PC-3 (cell line): ENCODE measurements at regions of chr5 and their contacts with region 1.

Region 1: DNA sequence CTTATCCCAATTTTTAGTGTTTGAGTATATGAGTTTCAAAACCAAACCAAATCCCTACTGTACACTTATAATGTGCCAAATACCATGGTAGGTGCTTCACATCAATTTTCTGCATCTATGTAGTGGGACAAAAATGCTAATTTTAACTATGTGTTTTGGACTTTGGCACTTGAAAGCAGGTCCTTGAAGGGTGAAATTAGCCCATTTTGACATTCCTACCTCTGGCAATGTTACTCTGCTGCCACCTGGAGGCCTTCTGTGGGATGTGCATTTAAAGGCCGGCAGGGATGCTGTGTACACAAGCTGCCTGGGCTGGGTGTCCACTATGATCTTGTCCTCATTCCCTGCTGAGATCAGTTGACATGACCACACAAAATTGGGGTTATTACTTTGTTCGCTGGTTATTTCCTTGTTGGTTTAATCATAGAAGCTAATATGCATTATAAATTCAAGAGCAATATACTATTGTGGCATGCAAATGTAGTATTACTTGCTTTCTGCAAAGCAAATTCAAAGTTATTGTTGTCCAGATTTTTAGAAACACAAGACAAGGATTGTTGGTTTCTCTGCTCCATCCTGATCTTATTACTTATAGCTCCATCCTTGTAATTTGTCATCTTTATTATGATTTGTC is 166.8 kb downstream of the ARHGEF28 start:
- DNase-seq: peak; percentile 83
- ATAC-seq: peak; percentile 57
- H3K4me3 ChIP-seq: no peak overlapping the region
- H3K27ac ChIP-seq: no peak overlapping the region
- H3K4me1 ChIP-seq: peaks cover 46% of the 10 kb centered on the region
- H3K27me3 ChIP-seq: no peaks in the 10 kb centered on the region
- CTCF ChIP-seq: peak; percentile 85

Region 2: DNA sequence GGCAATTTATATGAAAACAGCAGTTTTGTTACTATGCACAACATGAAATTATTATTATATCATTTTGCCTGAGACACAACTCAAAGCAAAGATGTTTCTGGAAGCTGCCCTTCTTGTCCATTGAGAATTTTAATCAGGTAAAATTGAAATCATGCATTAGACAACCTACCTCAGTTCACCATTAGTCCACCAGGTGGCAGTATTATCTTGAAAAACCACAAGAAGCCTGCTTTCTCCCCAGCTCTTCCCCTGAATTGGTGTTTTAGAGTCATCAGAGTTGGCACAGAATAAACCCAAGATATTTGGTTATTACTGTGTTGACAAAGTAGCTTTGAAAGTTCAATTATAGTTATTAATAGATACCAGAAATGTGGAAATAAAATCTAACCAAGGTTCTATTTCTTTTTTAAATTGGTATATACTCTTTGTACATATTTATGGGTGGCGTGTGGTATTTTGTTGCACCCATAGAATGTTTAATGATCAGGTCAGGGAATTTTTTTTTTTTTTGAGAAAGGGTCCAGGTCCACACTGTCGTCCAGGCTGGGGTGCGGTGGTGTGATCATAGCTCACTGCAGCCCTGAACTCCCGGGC is 201.6 kb before region 1 on chr5:
- CTCF ChIA-PET with region 1: interaction called, 5 read pairs
- POLR2A ChIA-PET with region 1: no interaction called
- intact Hi-C with region 1: loop called (anchors 1 kb)
- DNase-seq: peak; percentile 87
- ATAC-seq: peak; percentile 65
- H3K4me3 ChIP-seq: no peak overlapping the region
- H3K27ac ChIP-seq: no peak overlapping the region
- H3K4me1 ChIP-seq: peaks cover 24% of the 10 kb centered on the region
- H3K27me3 ChIP-seq: no peaks in the 10 kb centered on the region
- CTCF ChIP-seq: peak; percentile 84

Region 3: DNA sequence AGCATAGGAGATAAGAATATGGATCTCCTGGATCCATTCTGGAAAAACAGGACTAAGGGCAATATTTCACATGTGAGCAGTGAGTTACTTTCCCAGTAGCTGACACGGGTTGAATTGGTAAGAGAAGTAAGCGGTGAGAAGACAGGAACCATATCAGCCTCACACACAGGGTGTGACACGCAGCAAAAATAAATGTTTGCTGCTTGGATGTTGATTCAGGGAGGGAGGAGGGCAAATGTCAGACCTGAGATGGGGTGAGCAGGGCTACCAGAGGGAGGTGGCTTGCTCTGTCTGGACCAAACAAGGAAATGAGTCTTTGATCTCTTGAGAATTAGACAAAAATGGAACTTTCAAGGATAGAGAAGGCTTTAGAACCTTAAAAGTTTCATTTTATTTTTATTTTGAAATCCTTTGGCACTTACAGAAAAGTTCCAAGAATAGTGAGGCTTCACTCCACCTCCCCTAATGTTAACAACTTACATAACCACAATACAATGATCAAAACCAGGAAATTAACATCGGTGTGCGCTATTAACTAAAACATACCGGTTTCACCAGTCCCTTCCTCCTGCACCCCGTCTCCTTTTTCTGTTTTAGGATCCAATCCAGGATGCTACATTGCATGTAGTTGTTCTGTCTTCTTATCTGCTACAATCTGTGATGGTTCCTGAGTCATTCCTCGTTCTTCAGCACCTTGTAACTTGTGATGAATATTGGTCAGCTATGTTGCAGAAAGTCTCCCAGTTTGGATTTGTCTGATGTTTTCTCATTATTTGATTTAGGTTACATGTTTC is 187.4 kb before region 1 on chr5:
- CTCF ChIA-PET with region 1: no interaction called
- POLR2A ChIA-PET with region 1: no interaction called
- intact Hi-C with region 1: loop called (anchors 5 kb)
- DNase-seq: peak; percentile 72
- ATAC-seq: peak; percentile 88
- H3K4me3 ChIP-seq: peak overlapping the region; percentile 26; the same call in 1 of the 2 replicates
- H3K27ac ChIP-seq: peak overlapping the region; percentile 54
- H3K4me1 ChIP-seq: peaks cover 33% of the 10 kb centered on the region
- H3K27me3 ChIP-seq: no peaks in the 10 kb centered on the region
- CTCF ChIP-seq: no peak

Region 4: DNA sequence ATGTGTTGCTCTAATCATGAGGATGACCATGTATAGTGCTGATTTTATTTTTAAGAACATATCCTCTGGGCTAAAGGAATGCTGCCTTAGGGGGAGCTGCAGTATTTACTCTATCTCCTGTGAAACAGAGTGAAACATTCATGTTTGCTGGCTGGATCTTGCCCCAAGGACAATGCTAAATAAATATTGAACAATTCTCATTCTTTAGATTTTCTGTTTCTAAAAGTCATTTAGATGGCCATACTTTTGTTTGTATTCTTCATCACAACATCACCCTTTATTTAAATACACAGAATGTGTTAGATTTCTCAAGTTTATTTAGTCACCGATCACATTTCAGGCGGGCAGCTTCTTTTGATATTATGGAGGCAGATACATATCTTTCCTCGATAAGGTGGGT is 63.5 kb before region 1 on chr5:
- CTCF ChIA-PET with region 1: no interaction called
- POLR2A ChIA-PET with region 1: no interaction called
- intact Hi-C with region 1: no loop called
- DNase-seq: peak; percentile 58
- ATAC-seq: peak; percentile 88
- H3K4me3 ChIP-seq: no peak overlapping the region
- H3K27ac ChIP-seq: no peak overlapping the region
- H3K4me1 ChIP-seq: peaks cover 12% of the 10 kb centered on the region; the same call in 1 of the 2 replicates
- H3K27me3 ChIP-seq: no peaks in the 10 kb centered on the region
- CTCF ChIP-seq: no peak